Vagina (tissue), 2 donors: ENCODE measurements at regions of chr19 and their contacts with region 1.

Region 1: GRCh38 chr19:9796113-9796773 is 22.6 kb downstream of the FBXL12 start:
- DNase-seq: no peak
- H3K4me3 ChIP-seq: no peak overlapping the region
- H3K27ac ChIP-seq: peak overlapping the region; percentile 40
- H3K4me1 ChIP-seq: peaks cover 14% of the 10 kb centered on the region
- H3K27me3 ChIP-seq: no peaks in the 10 kb centered on the region
- CTCF ChIP-seq: peak; percentile 47 to 82 (median 78)
- POLR2A ChIP-seq: no peak

Region 2: DNA sequence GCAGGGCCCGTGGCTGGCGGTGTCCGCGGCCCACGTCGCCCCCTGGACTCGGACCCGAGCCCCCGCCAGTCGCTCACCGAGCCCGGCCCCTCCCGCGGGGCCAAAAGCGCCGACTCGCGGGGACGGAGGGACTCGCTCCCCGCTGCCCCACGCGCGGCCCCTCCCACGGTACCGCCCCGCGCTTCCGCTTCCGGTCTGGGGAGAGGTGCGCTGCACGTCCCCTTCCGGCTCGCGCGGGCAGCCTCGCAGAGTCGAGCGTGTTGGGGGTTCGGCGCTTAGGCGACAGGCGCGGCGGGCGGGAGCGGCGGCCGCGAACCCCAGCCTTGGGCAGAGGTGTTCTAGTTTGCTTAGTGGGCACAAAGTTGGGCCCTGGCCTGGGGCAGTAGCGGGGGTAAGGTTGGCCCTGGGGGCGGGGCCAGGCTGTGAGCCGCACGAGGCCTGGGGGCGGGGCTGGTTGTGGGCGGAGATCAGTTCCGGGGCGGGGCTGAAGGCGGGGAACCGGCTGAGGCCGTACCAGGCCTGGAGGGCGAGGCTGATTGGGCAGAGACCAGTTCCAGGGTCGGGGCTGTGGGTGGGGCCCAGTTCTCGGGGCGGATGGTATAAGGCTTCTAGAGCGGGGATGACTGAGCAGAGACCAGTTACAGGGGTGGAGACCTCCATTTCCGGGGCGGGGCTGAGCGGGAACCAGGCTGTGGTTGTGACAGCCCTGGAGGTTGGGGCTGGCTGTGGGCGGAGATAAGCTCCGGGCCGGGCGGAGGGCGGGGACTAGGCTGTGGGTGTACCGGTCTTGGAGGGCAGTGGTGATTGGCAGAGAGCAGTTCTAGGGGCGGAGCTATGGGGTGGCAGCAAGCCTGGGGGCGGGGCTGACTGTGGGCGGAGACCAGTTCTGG is 963.9 kb before region 1 on chr19 and contains the starts of genes MBD3L1 and ZNF558:
- intact Hi-C with region 1: loop called (anchors 5 kb)
- DNase-seq: peak in 1 of 2 donors; percentile 98
- H3K4me3 ChIP-seq: peak within 1 kb of the TSS; percentile 51 to 84
- H3K27ac ChIP-seq: peak within 1 kb of the TSS; percentile 86
- H3K4me1 ChIP-seq: peaks cover 8% of the 10 kb centered on the region
- H3K27me3 ChIP-seq: no peaks in the 10 kb centered on the region
- CTCF ChIP-seq: peak in 1 of 3 experiments; percentile 17
- POLR2A ChIP-seq: peak in 1 of 2 donors; percentile 59
- total RNA-seq, gene MBD3L1: not detected
- total RNA-seq, gene ZNF558: 23.8 TPM

Region 3: DNA sequence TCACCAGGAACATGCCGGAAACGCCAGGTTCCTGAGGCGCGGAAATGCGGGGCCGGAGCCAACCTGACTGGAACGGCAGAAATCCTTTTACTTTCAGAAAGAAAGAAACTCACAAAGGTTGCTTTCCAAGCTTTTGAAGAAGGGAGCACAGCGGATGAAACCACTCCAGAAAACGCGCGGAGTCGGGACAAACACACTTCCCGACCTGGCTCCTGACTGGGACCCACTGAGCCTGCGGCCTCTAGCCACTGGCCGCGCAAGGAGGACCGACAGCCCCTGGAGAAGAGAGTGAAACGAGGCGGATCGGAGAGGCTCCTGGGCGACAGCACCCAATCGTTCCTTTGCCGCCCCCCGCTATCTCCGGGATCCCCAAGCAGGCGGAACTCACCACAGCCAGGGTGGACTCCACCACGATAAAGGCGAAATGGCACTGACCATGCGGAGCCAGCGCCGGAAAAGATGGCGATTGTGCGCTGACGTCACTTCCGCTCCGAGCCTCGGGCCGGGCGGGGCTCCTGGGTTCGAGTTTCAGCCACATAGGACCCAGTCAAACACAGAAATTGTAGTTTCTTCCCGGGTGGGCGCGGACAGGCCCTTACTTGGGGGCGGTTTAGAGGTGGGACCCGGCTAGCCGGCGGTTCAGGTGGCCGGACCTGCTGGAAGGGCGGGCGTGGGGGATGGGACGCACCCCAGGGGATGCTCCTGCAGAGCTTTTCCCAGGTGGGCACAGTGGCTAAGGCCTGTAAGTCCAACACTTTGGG is 212.0 kb before region 1 on chr19 and contains the start of gene ZNF121:
- intact Hi-C with region 1: loop called (anchors 1 kb)
- DNase-seq: peak in 1 of 2 donors; percentile 85
- H3K4me3 ChIP-seq: peak within 1 kb of the TSS; percentile 66 to 72
- H3K27ac ChIP-seq: peak within 1 kb of the TSS; percentile 92
- H3K4me1 ChIP-seq: peaks cover 20% of the 10 kb centered on the region
- H3K27me3 ChIP-seq: no peaks in the 10 kb centered on the region
- CTCF ChIP-seq: no peak
- POLR2A ChIP-seq: peak in 1 of 2 donors; percentile 17
- total RNA-seq, gene ZNF121: 36.6 TPM

Region 4: DNA sequence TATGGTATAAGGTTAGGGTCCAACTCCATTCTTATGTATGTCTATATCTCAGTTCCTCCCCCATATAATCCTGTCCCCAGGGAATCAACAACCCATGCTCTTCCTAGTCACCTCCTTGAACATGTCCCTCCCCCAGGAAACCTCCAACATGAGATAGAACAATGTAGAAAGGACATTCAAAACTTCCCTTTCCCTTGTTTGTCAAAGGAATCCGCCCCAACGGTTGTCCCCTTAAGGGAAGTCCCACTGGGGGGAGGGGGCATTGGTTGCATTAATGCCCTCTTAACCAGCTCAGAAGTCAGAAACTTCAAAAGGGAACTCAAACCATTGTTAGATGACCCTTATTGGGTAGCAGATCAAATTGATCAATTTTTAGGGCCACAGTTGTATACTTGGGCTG is 168.4 kb before region 1 on chr19:
- intact Hi-C with region 1: loop called (anchors 5 kb)
- DNase-seq: no peak
- H3K4me3 ChIP-seq: no peak overlapping the region
- H3K27ac ChIP-seq: no peak overlapping the region
- H3K4me1 ChIP-seq: peaks cover 5% of the 10 kb centered on the region
- H3K27me3 ChIP-seq: no peaks in the 10 kb centered on the region
- CTCF ChIP-seq: no peak
- POLR2A ChIP-seq: no peak